ENCODE measurements at regions of chr2 and their contacts with region 1.

Region 1: DNA sequence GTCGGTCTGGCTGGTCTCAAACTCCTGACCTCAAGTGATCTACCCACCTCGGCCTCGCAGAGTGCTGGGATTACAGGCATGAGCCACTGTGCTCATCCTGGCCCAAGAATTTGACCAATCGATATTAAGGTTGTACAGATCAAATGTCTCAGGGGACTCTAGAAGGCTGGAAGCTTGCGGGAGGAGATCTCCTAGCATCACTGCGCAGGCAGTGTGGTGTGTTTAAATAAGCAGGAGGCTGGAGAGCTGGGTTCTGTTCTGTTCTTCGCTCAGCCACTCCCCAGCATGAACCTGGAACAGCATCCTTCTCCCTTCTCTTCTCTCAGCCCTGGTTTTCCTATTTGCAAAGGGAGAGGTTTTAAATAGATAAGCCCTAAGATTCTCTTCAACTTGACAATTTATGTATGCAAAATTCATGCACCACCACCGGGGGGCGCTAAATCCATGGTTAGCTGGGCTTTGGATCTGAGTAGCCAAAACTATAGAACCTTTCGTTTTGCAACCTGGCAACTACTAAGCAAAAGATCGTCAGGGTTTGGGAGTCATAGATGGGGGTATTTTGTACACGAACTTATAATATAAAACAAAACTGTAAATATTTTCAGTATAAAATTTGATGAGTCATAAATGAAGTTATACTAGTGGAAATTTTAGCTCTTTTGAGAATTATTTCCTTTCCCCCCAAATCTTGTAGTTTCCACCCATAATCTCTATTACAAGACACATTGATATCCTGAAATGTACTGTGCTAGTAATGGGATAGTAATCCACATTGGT is 60.6 kb downstream of the SLC16A14 start:
- DNase-seq: peak; percentile 84
- H3K4me3 ChIP-seq: no peak overlapping the region
- H3K27ac ChIP-seq: no peak overlapping the region
- H3K4me1 ChIP-seq: no peaks in the 10 kb centered on the region
- H3K27me3 ChIP-seq: no peaks in the 10 kb centered on the region
- CTCF ChIP-seq: peak; percentile 82

Region 2: DNA sequence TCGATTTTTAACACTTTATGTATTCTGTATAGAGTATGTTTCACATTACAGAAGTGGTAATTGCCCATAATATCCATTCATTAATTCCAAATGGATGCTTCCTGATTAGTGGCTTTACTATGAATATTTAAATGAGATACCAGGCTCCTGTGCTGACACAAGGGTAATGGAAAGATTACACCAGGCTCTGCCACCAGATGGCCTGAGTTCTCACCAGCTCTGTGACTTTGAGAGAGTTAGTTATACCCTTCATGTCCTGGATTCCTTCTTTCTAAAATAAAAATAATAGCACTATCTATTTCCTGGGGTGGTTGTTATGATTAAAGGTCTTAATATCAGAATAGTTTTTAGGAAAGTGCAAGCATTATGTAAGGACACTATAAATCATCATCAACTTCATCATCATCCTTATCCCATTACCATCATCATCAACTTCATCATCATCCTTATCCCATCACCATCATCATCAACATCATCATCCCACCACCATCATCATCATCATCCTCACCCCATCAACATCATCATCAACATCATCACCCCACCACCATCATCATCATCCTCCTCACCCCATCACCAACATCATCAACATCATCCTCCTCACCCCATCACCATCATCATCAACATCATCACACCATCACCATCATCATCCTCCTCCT is 445.5 kb before region 1 on chr2:
- intact Hi-C with region 1: no loop called
- DNase-seq: no peak
- H3K4me3 ChIP-seq: no peak overlapping the region
- H3K27ac ChIP-seq: no peak overlapping the region
- H3K4me1 ChIP-seq: no peaks in the 10 kb centered on the region
- H3K27me3 ChIP-seq: no peaks in the 10 kb centered on the region
- CTCF ChIP-seq: no peak

Region 3: DNA sequence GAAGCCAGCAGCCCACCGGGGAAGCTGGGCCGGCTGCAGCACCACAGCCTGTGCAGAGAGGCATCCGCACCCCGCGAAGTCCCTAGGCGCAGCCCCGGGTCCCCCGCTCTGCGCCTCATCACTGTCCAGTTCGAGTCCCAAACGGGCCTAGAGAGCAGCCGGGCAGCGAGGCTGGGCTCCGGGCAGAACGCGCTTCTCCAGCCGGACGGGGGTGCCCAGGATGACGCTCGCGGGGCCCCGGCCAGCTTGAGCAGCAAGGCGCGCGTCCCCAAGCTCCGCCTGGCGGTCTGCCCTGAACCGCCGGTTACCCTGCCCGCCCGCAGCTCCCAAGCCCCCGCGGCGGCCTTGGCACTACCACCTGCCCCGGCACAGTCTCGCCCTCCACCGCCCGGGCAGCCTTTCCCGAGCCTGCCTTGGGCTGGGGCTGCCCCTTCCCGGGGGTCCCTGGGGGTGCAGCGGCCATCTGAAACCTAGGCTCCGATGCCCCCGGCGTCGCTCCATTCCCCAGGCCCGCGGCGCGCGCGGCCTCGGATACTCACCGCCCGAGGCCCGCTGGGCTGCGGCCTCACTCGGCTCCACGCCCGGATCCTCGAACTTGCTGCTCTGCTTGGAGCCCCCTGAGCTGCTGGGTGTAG is 60.0 kb after region 1 on chr2:
- intact Hi-C with region 1: loop called (anchors 5 kb)
- DNase-seq: peak; percentile 56
- H3K4me3 ChIP-seq: peak overlapping the region; percentile 65
- H3K27ac ChIP-seq: no peak overlapping the region
- H3K4me1 ChIP-seq: no peaks in the 10 kb centered on the region
- H3K27me3 ChIP-seq: no peaks in the 10 kb centered on the region
- CTCF ChIP-seq: no peak

Region 4: GRCh38 chr2:230160112-230160660 is 152.1 kb after region 1 on chr2:
- intact Hi-C with region 1: loop called (anchors 1 kb)
- DNase-seq: peak; percentile 53
- H3K4me3 ChIP-seq: no peak overlapping the region
- H3K27ac ChIP-seq: no peak overlapping the region
- H3K4me1 ChIP-seq: no peaks in the 10 kb centered on the region
- H3K27me3 ChIP-seq: no peaks in the 10 kb centered on the region
- CTCF ChIP-seq: peak; percentile 85

Measured in colonic mucosa (tissue), 4 donors.